ENCODE measurements at regions of chr12 and their contacts with region 1.

Region 1: DNA sequence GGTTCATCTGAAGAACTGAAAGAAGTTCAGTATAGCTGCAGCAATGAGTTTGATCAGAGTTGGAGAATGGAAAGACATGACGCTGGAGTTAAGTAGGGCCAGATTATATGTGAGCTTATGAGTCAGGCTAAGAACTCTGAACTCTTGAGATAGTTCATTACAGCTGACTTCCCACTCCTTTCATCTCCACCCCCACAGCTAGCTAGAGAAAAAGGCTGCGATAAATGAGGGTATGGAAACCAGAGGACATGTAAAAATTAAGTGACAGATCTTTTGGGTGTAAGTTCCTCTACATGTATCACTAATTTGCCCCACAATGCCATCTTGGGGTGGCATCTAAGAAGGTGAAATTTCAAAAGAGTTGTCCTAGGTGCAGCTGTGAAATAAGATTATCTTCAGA is 28.6 kb downstream of the PYM1 start:
- DNase-seq: peak; percentile 71
- H3K4me3 Mint-ChIP-seq: no peak overlapping the region
- H3K27ac Mint-ChIP-seq: peak overlapping the region; percentile 70
- H3K4me1 Mint-ChIP-seq: peaks cover 13% of the 10 kb centered on the region
- H3K27me3 Mint-ChIP-seq: no peaks in the 10 kb centered on the region

Region 2: GRCh38 chr12:55330446-55330845 is 568.6 kb before region 1 on chr12 and contains the start of gene OR6C3:
- CTCF ChIA-PET with region 1: no interaction called
- intact Hi-C with region 1: no loop called
- DNase-seq: no peak
- H3K4me3 Mint-ChIP-seq: no peak within 1 kb of the TSS
- H3K27ac Mint-ChIP-seq: no peak within 1 kb of the TSS
- H3K4me1 Mint-ChIP-seq: no peaks in the 10 kb centered on the region
- H3K27me3 Mint-ChIP-seq: peaks cover 11% of the 10 kb centered on the region
- total RNA-seq, gene OR6C3: not detected

Region 3: DNA sequence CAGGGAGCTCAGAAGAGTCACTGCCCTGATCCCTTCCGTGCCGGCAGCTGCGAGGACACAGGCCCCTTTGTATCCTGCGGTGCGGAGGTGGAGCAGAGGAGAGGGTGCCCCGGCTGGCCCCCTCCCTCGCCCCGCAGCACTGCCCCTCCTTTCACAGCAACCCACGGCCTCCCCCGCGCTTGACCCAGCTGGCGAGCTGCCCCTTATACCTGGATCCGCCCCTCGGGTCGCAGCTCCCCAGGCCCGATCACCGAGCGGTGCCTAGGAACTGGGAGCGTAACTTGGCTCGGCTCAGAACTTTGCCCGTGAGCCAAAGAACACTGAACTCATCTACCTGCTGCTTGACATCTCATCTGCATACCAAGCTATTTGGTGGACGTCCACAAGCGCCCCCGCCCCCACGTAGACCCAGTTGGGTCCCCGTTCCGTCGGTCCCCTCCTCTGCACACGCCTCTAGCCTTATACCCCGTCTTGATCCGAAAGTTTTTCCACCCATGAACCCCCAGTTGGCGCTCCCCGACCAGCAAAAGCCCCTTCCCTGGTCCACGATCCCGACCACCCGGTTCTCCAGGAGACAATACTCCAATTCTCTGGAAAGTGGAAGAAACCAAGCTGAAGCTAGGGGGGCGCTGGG is 69.0 kb before region 1 on chr12:
- CTCF ChIA-PET with region 1: interaction called, 4 read pairs
- intact Hi-C with region 1: loop called (anchors 1 kb)
- DNase-seq: peak; percentile 24
- H3K4me3 Mint-ChIP-seq: peak overlapping the region; percentile 96
- H3K27ac Mint-ChIP-seq: peak overlapping the region; percentile 87
- H3K4me1 Mint-ChIP-seq: peaks cover 52% of the 10 kb centered on the region
- H3K27me3 Mint-ChIP-seq: no peaks in the 10 kb centered on the region